H1 (cell line): ENCODE measurements at regions of chr1 and their contacts with region 1.

Region 1: DNA sequence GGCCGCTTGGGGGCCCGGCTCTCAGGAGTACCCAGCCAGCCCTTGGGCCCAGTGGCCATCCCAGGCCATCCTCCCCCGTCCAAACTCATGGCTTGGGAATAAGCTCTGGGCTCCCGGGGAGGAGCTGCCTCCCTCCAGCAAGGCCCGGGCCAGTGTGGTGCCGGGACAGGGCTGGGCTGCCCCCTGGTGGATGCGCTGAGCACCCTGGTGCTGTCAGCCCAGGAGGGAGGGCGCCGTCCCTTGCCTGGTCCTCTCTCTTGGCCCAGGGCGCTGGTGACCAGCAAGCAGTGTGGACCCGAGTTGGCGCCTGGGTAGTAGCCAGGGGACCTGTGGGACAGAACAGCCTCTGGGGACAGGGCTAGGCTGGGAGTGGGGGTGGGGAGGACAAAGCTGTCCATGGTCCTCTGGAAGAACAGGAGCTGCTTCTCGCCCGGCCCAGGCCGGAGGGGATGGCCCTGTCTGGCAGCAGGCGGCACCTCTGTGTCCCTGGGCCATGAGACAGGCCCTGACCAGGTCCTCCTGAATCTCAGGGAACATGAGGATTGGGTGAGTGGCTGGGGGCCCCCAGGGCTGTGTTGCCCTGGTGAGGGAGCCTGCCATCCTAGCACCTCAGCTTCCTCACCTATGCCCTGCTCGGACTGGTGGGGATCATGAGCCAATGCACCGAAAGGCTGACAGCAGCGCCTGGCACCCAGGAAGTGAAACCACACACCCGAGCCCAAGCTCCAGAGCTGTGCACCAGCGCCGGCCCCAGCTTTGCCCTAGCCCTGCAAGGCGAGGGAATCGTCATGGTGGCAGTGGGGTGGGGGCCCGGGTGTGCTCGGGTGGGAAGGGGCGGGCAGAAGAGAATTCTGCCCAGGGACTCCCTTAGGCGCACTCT is 9.4 kb downstream of the MORN1 start:
- DNase-seq: peak; percentile 39 to 88
- H3K4me3 ChIP-seq: no peak overlapping the region
- H3K27ac ChIP-seq: no peak overlapping the region
- H3K4me1 ChIP-seq: peaks cover 0 to 2% (median under 1%) of the 10 kb centered on the region in 4 experiments; a peak in 3 of 7 replicates
- H3K27me3 ChIP-seq: no peaks in the 10 kb centered on the region
- CTCF ChIP-seq: peak in 2 of 3 experiments; percentile 93 to 96; a peak in 3 of 4 replicates
- EP300 ChIP-seq: no peak
- POLR2A ChIP-seq: no peak
- RAD21 ChIP-seq: peak; percentile 95 to 98

Region 2: DNA sequence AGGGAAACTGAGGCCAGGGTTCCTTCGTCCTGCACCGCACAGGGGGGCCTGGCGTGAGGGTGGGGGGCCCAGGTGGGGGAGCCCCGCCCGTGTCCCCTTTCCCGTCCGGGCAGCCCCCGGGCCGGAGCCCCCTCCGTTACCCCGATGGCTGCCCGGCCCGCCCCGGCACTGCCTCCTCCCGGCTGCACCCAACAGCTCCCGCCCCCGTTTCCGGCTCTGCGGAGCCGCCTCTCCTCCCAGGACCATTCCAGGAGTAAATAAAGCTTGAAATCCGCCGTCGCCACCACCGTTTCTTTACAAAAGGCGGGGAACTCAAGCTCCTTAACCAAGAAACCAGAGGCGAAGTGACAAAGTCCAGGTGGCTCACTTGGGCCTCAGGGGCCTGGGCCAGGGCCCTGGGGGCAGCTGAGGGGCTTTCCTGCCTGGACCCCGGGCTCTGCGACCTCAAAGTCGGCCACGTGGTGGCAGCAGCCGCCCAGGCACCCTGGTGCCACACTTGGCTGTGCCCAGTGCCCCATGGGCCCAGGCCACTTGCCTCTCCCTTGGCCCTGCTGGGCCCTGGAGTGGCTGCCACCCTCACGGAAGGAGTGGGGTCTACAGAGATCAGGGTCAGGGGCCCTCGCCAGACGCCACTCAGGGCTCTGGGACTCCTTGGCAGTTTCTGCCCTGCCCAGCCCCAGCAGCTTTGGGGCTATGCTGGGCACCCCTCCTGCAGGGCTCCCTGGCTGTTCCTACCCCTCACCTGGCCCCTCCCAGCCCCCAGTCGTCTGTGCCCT is 186.9 kb before region 1 on chr1:
- CTCF ChIA-PET with region 1: interaction called, 154 read pairs
- POLR2A ChIA-PET with region 1: interaction called, 16 read pairs
- DNase-seq: peak; percentile 65 to 95
- H3K4me3 ChIP-seq: peak overlapping the region; percentile 51 to 72 (median 60)
- H3K27ac ChIP-seq: peak overlapping the region; percentile 9; the same call in 1 of the 2 replicates
- H3K4me1 ChIP-seq: peaks cover 0 to 17% (median 6%) of the 10 kb centered on the region in 4 experiments; a peak in 5 of 7 replicates
- H3K27me3 ChIP-seq: no peaks in the 10 kb centered on the region
- CTCF ChIP-seq: peak in 2 of 3 experiments; percentile 94 to 96; a peak in 3 of 4 replicates
- EP300 ChIP-seq: no peak
- POLR2A ChIP-seq: 0 out of 3 replicates have a peak, but pooled peaks of 1 of the 2 experiments have one; percentile 26
- RAD21 ChIP-seq: peak; percentile 98 to 99

Region 3: GRCh38 chr1:2212542-2213491 is 169.2 kb before region 1 on chr1:
- CTCF ChIA-PET with region 1: interaction called, 22 read pairs
- POLR2A ChIA-PET with region 1: no interaction called
- DNase-seq: peak; percentile 79 to 92
- H3K4me3 ChIP-seq: peak overlapping the region; percentile 19 to 55 (median 44); a peak in 7 of 8 replicates
- H3K27ac ChIP-seq: peak overlapping the region; percentile 82
- H3K4me1 ChIP-seq: peaks cover 0 to 19% (median 11%) of the 10 kb centered on the region in 4 experiments; a peak in 6 of 7 replicates
- H3K27me3 ChIP-seq: no peaks in the 10 kb centered on the region
- CTCF ChIP-seq: peak in 2 of 3 experiments; percentile 37 to 55; a peak in 3 of 4 replicates
- EP300 ChIP-seq: peak in 1 of 2 experiments; percentile 44; a peak in 1 of 3 replicates
- POLR2A ChIP-seq: peak in 1 of 2 experiments; percentile 87; a peak in 2 of 3 replicates
- RAD21 ChIP-seq: peak in 1 of 2 experiments; percentile 43; a peak in 2 of 4 replicates

Region 4: GRCh38 chr1:2314803-2315673 is 66.9 kb before region 1 on chr1:
- CTCF ChIA-PET with region 1: interaction called, 23 read pairs
- POLR2A ChIA-PET with region 1: interaction called, 3 read pairs
- DNase-seq: peak in 1 of 2 experiments; percentile 76
- H3K4me3 ChIP-seq: peak overlapping the region in 3 of 4 experiments; percentile 19 to 53 (median 36); a peak in 4 of 8 replicates
- H3K27ac ChIP-seq: peak overlapping the region; percentile 34; the same call in 1 of the 2 replicates
- H3K4me1 ChIP-seq: peaks cover 7 to 43% (median 30%) of the 10 kb centered on the region in 4 experiments
- H3K27me3 ChIP-seq: no peaks in the 10 kb centered on the region
- CTCF ChIP-seq: peak in 2 of 3 experiments; percentile 21 to 40; a peak in 2 of 4 replicates
- EP300 ChIP-seq: no peak
- POLR2A ChIP-seq: no peak
- RAD21 ChIP-seq: peak in 1 of 2 experiments; percentile 4; a peak in 1 of 4 replicates

Region 5: DNA sequence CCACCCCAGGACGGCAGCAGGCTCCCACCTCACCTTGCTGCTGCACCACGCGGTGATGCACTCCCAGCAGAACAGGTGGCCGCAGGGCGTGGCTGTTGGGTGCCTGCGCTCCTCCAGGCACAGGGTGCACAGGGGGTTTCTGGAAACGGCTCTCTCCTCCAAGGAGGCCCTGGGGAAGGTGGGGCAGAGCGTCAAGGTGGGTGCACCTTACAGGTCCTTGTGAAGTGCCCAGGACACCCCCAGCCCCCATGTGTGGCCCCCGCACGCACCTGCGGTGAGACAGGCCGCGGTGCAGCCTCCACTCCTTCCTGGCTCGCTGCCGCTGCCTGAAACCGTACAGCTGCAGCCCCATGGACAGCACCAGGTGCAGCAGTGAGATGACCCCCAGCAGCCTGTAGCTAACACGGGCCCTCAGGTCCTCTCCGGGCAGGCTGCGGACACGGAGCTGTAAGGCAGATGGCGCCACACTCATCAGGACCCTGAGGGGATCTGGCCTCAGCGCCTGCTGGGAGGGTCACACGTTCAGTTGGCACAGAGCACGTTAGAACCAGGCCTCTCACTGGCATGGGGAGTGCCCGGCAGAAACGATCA is 24.6 kb after region 1 on chr1:
- CTCF ChIA-PET with region 1: interaction called, 9 read pairs
- POLR2A ChIA-PET with region 1: interaction called, 13 read pairs
- DNase-seq: no peak
- H3K4me3 ChIP-seq: no peak overlapping the region
- H3K27ac ChIP-seq: no peak overlapping the region
- H3K4me1 ChIP-seq: peaks cover 0 to 1% (median under 1%) of the 10 kb centered on the region in 4 experiments; a peak in 2 of 7 replicates
- H3K27me3 ChIP-seq: no peaks in the 10 kb centered on the region
- CTCF ChIP-seq: peak in 2 of 3 experiments; percentile 37 to 52; a peak in 3 of 4 replicates
- EP300 ChIP-seq: no peak
- POLR2A ChIP-seq: no peak; a peak in 1 of 3 replicates
- RAD21 ChIP-seq: peak; percentile 8 to 27; a peak in 2 of 4 replicates